Activated CD4-positive, alpha-beta memory T cell treated with anti-CD3 and anti-CD28 coated beads for 36 hours (primary cell): ENCODE measurements at regions of chr20 and their contacts with region 1.

Region 1: GRCh38 chr20:2752567-2753460 is 47.6 kb downstream of the CPXM1 start:
- DNase-seq: peak; percentile 64
- H3K4me3 Mint-ChIP-seq: peak overlapping the region; percentile 78
- H3K27ac Mint-ChIP-seq: no peak overlapping the region
- H3K4me1 Mint-ChIP-seq: peaks cover 37% of the 10 kb centered on the region
- H3K27me3 Mint-ChIP-seq: peaks cover 23% of the 10 kb centered on the region

Region 2: GRCh38 chr20:2637246-2637645 is 115.6 kb before region 1 on chr20:
- CTCF ChIA-PET with region 1: no interaction called
- POLR2A ChIA-PET with region 1: no interaction called
- intact Hi-C with region 1: no loop called
- DNase-seq: no peak
- H3K4me3 Mint-ChIP-seq: no peak overlapping the region
- H3K27ac Mint-ChIP-seq: no peak overlapping the region
- H3K4me1 Mint-ChIP-seq: no peaks in the 10 kb centered on the region
- H3K27me3 Mint-ChIP-seq: peaks cover 6% of the 10 kb centered on the region

Region 3: GRCh38 chr20:2688041-2688591 is 64.7 kb before region 1 on chr20:
- CTCF ChIA-PET with region 1: interaction called, 42 read pairs
- POLR2A ChIA-PET with region 1: no interaction called
- intact Hi-C with region 1: loop called (anchors 2 kb)
- DNase-seq: peak; percentile 90
- H3K4me3 Mint-ChIP-seq: peak overlapping the region; percentile 45
- H3K27ac Mint-ChIP-seq: no peak overlapping the region
- H3K4me1 Mint-ChIP-seq: peaks cover 22% of the 10 kb centered on the region
- H3K27me3 Mint-ChIP-seq: peaks cover 16% of the 10 kb centered on the region

Region 4: GRCh38 chr20:2713285-2713684 is 39.5 kb before region 1 on chr20:
- CTCF ChIA-PET with region 1: interaction called, 10 read pairs
- POLR2A ChIA-PET with region 1: no interaction called
- intact Hi-C with region 1: loop called (anchors 2 kb)
- DNase-seq: no peak
- H3K4me3 Mint-ChIP-seq: no peak overlapping the region
- H3K27ac Mint-ChIP-seq: no peak overlapping the region
- H3K4me1 Mint-ChIP-seq: no peaks in the 10 kb centered on the region
- H3K27me3 Mint-ChIP-seq: peaks cover 2% of the 10 kb centered on the region

Region 5: GRCh38 chr20:2729251-2729713 is 23.5 kb before region 1 on chr20:
- CTCF ChIA-PET with region 1: interaction called, 15 read pairs
- POLR2A ChIA-PET with region 1: interaction called, 3 read pairs
- intact Hi-C with region 1: no loop called
- DNase-seq: peak; percentile 52
- H3K4me3 Mint-ChIP-seq: peak overlapping the region; percentile 38
- H3K27ac Mint-ChIP-seq: peak overlapping the region; percentile 81
- H3K4me1 Mint-ChIP-seq: peaks cover 15% of the 10 kb centered on the region
- H3K27me3 Mint-ChIP-seq: no peaks in the 10 kb centered on the region

Region 6: GRCh38 chr20:2771631-2772080 is 18.8 kb after region 1 on chr20:
- CTCF ChIA-PET with region 1: interaction called, 10 read pairs
- POLR2A ChIA-PET with region 1: no interaction called
- intact Hi-C with region 1: no loop called
- DNase-seq: no peak
- H3K4me3 Mint-ChIP-seq: no peak overlapping the region
- H3K27ac Mint-ChIP-seq: no peak overlapping the region
- H3K4me1 Mint-ChIP-seq: peaks cover 7% of the 10 kb centered on the region
- H3K27me3 Mint-ChIP-seq: peaks cover 10% of the 10 kb centered on the region

Region 7: DNA sequence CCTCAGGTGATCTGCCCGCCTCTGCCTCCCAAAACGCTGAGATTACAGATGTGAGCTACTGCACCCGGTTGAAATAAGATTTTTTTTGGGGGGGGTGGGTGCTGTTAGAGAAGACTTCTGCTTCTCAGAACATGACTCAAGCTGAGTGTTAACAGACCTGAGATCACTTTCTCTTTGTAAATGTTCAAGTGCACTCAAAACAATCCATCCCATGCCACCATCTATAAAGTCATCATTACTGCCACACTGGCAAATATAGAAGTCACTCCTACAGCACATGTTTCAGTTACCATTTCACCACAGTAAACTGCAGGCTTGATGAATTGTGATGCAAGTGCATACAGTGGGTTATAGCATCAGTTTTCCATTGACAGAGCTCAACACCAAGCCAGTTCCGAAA is 96.7 kb after region 1 on chr20:
- CTCF ChIA-PET with region 1: interaction called, 8 read pairs
- POLR2A ChIA-PET with region 1: no interaction called
- intact Hi-C with region 1: loop called (anchors 5 kb)
- DNase-seq: no peak
- H3K4me3 Mint-ChIP-seq: no peak overlapping the region
- H3K27ac Mint-ChIP-seq: no peak overlapping the region
- H3K4me1 Mint-ChIP-seq: peaks cover 33% of the 10 kb centered on the region
- H3K27me3 Mint-ChIP-seq: no peaks in the 10 kb centered on the region